ENCODE measurements at regions of chr20 and their contacts with region 1.

Region 1: DNA sequence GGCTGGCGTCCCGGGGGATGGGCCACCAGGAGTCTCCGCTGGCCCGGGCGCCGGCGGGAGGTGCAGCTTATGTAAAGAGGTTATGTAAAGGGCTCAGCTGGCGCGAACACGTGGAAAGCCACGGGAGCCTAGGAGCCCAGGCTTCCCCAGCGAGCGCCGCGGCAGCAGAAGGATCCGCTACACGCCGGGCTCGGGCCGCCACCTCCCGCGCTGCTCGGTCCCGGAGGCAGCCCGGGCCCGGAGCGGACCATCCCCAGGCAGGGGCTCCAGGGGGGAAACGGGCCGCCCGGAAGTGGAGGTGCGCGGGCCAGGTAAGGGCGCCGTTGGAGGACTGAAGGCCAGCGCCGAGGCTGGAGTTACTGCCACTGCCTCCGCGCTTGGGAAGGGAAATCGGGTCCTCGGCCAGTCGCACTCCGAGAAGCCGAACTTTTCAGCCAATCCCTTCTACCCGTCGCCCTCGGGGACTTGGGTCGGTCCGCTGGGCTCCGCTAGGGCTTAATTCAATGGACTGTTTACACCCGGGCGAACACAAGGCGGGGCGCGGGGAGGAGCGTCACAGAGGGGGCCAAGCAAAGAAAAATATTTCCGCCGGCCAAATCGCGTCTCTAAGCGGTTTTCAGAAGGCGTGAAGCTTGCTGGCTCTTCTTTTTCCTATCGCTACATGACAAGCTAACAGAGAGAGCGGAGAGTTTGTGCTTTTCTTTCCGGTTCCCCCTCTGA is 398 bp downstream of the STK35 start:
- DNase-seq: peak; percentile 94
- H3K4me3 Mint-ChIP-seq: peak overlapping the region; percentile 86
- H3K27ac Mint-ChIP-seq: peak overlapping the region; percentile 100
- H3K4me1 Mint-ChIP-seq: peaks cover 23% of the 10 kb centered on the region
- H3K27me3 Mint-ChIP-seq: no peaks in the 10 kb centered on the region
- CTCF ChIP-seq: no peak

Region 2: GRCh38 chr20:1685304-1686052 is 416.5 kb before region 1 on chr20:
- CTCF ChIA-PET with region 1: no interaction called
- POLR2A ChIA-PET with region 1: no interaction called
- intact Hi-C with region 1: no loop called
- DNase-seq: no peak
- H3K4me3 Mint-ChIP-seq: no peak overlapping the region
- H3K27ac Mint-ChIP-seq: no peak overlapping the region
- H3K4me1 Mint-ChIP-seq: no peaks in the 10 kb centered on the region
- H3K27me3 Mint-ChIP-seq: peaks cover 14% of the 10 kb centered on the region
- CTCF ChIP-seq: no peak

Region 3: DNA sequence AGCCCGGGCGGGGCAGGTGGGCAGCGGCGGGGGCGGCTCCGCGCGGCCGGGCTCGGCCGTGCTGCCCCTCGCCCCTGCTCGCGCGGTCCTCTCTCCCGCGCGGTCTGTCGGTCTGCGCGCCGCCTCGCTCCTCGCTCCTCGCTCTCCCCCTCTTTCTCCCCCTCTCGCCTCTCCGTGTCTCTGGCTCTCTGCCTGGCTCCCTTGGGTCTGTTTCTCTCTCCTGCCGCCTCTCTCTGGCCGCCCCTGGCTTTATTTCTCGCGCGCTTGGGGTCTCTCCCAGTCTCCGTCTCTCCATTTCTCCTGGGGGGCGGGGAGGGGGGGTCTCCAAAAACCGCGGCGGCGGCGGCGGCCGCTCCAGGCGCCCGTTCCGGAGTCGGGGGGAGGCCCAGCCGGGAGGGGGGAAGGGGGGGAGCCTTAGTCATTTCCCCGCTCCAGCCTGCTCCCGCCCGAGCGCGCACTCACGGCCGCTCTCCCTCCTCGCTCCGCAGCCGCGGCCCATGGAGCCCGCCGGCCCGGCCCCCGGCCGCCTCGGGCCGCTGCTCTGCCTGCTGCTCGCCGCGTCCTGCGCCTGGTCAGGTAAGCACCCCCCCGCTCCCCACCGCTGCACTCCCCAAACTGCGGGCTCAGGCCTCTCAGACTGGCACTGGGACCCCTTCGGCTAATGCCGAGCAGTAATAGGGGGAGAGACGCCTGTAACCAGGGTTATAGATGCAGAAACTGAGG is 206.9 kb before region 1 on chr20 and contains the start of gene SIRPA:
- CTCF ChIA-PET with region 1: interaction called, 5 read pairs
- POLR2A ChIA-PET with region 1: interaction called, 12 read pairs
- intact Hi-C with region 1: loop called (anchors 5 kb)
- DNase-seq: peak; percentile 64
- H3K4me3 Mint-ChIP-seq: peak within 1 kb of the TSS; percentile 79
- H3K27ac Mint-ChIP-seq: peak within 1 kb of the TSS; percentile 66
- H3K4me1 Mint-ChIP-seq: peaks cover 37% of the 10 kb centered on the region
- H3K27me3 Mint-ChIP-seq: no peaks in the 10 kb centered on the region
- CTCF ChIP-seq: no peak
- total RNA-seq, gene SIRPA: 18.0 and 23.6 TPM in 2 replicates

Region 4: DNA sequence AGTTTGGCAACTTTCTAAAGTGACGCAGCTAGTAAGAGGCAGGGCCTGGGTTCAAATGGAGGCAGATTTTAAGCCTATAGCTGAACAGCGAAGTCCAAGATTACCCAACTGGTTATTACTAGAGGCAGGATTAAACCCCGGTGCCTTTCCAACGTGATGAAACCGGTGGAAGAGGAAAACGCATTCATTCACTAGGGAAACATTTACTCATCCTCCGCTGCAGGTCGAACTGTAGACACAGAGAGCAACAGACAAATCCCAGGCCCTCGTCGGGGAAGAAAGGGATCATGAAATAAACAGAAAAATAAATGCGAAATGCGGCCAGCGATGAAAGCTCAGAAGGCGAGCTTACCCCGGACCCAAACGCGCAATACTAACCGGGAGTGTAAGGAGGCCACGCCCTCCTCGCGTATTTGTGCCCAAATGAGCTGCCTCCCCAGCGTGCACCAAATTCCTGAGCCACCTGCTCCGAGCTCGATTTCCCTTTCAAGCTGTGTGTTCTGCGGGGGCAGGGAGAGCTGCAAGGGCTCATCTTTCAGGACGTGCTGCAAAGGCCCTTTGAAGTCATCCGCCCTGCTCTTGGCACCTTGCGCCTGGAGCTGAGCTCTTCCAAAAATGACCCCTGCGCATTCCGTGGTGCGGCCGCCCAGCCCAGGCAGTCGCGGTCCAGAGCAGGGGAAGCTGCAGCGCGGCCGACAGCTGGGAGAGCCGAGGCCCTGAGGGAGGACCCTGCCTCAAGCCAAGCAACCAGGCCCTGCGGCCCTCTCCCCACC is 155.1 kb before region 1 on chr20:
- CTCF ChIA-PET with region 1: interaction called, 5 read pairs
- POLR2A ChIA-PET with region 1: interaction called, 19 read pairs
- intact Hi-C with region 1: no loop called
- DNase-seq: no peak
- H3K4me3 Mint-ChIP-seq: no peak overlapping the region
- H3K27ac Mint-ChIP-seq: no peak overlapping the region
- H3K4me1 Mint-ChIP-seq: peaks cover 30% of the 10 kb centered on the region
- H3K27me3 Mint-ChIP-seq: no peaks in the 10 kb centered on the region
- CTCF ChIP-seq: no peak

Region 5: GRCh38 chr20:2133318-2134183 is 31.5 kb after region 1 on chr20:
- CTCF ChIA-PET with region 1: interaction called, 3 read pairs
- POLR2A ChIA-PET with region 1: interaction called, 33 read pairs
- intact Hi-C with region 1: no loop called
- DNase-seq: peak; percentile 38
- H3K4me3 Mint-ChIP-seq: no peak overlapping the region
- H3K27ac Mint-ChIP-seq: no peak overlapping the region
- H3K4me1 Mint-ChIP-seq: peaks cover 34% of the 10 kb centered on the region
- H3K27me3 Mint-ChIP-seq: no peaks in the 10 kb centered on the region
- CTCF ChIP-seq: no peak

Region 6: GRCh38 chr20:2151858-2152281 is 49.8 kb after region 1 on chr20:
- CTCF ChIA-PET with region 1: interaction called, 5 read pairs
- POLR2A ChIA-PET with region 1: interaction called, 51 read pairs
- intact Hi-C with region 1: loop called (anchors 10 kb)
- DNase-seq: peak; percentile 64
- H3K4me3 Mint-ChIP-seq: no peak overlapping the region
- H3K27ac Mint-ChIP-seq: peak overlapping the region; percentile 92
- H3K4me1 Mint-ChIP-seq: peaks cover 31% of the 10 kb centered on the region
- H3K27me3 Mint-ChIP-seq: no peaks in the 10 kb centered on the region
- CTCF ChIP-seq: no peak

Region 7: DNA sequence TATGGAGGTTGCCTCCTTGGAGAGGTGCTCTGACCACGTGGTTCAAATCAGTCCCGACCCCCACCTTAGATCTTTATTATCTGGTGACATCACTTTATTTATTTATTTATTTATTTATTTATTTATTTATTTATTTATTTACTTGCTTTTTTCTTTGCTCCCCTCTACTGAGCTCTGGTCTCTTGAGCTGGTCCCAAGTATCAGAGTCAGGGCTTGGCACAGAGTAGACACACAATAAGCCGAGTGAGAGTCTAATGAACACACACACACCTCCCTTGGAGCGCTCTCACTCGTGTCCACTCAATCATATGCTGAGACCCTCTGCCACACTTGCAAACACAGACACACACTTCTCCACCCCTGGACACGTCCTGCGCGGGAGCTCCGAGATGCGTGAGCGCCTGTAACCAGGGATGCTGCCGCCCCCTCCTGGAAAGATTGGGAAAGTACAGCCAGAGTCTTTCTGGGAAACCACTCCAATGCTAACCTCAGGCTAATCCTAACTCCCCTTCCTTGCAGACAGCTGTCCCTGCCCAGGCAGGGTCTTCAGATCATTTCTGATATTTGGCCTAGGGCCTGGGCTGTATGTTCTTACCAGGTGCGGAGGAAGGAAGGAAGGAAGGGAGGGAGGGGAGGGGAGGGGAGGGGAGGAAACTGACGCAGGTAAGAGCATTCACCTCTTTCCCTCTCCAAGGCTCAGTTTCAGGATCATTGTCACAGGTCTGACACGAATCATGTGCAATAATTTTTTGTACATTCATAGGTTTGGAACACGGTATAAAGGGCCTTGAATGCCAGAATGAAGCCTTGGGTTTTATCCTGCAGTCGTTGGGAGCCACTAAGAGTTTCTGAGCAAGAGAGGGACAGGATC is 70.5 kb after region 1 on chr20:
- CTCF ChIA-PET with region 1: interaction called, 36 read pairs
- POLR2A ChIA-PET with region 1: interaction called, 42 read pairs
- intact Hi-C with region 1: loop called (anchors 1 kb)
- DNase-seq: peak; percentile 62
- H3K4me3 Mint-ChIP-seq: no peak overlapping the region
- H3K27ac Mint-ChIP-seq: no peak overlapping the region
- H3K4me1 Mint-ChIP-seq: peaks cover 6% of the 10 kb centered on the region
- H3K27me3 Mint-ChIP-seq: peaks cover 62% of the 10 kb centered on the region
- CTCF ChIP-seq: peak; percentile 95

Region 8: GRCh38 chr20:2470423-2471193 is 368.6 kb after region 1 on chr20 and contains the start of gene SNRPB:
- CTCF ChIA-PET with region 1: no interaction called
- POLR2A ChIA-PET with region 1: interaction called, 17 read pairs
- intact Hi-C with region 1: no loop called
- DNase-seq: peak; percentile 98
- H3K4me3 Mint-ChIP-seq: peak within 1 kb of the TSS; percentile 96
- H3K27ac Mint-ChIP-seq: peak within 1 kb of the TSS; percentile 100
- H3K4me1 Mint-ChIP-seq: peaks cover 55% of the 10 kb centered on the region
- H3K27me3 Mint-ChIP-seq: no peaks in the 10 kb centered on the region
- CTCF ChIP-seq: no peak
- total RNA-seq, gene SNRPB: 236 and 240 TPM in 2 replicates